ENCODE measurements at regions of chr2 and their contacts with region 1.

Region 1: DNA sequence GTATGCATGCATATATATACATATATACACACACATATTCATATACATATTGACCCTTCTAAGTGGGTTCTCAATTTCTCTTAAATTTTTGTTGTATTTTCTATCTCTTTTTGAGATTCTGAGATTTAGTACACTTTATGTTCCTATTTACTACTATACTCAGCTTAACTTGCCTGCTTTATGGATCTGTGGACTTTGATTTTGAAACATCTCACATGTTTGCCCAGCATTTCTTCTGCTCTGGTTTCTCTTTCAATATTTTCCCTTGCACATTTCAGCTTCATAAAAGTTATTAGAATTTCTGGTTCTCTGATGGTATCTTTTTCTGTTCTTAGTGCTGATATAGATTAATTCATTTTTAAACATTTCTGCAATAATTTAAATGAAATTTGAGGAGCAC is 380.6 kb downstream of the SPAG16 start:
- DNase-seq: no peak
- H3K4me3 ChIP-seq: no peak overlapping the region
- H3K4me3 Mint-ChIP-seq: no peak overlapping the region
- H3K27ac Mint-ChIP-seq: no peak overlapping the region
- H3K4me1 ChIP-seq: peaks cover 9% of the 10 kb centered on the region; the same call in 1 of the 2 replicates
- H3K4me1 Mint-ChIP-seq: peaks cover 15% of the 10 kb centered on the region
- H3K27me3 ChIP-seq: no peaks in the 10 kb centered on the region
- H3K27me3 Mint-ChIP-seq: no peaks in the 10 kb centered on the region
- CTCF ChIP-seq: no peak

Region 2: DNA sequence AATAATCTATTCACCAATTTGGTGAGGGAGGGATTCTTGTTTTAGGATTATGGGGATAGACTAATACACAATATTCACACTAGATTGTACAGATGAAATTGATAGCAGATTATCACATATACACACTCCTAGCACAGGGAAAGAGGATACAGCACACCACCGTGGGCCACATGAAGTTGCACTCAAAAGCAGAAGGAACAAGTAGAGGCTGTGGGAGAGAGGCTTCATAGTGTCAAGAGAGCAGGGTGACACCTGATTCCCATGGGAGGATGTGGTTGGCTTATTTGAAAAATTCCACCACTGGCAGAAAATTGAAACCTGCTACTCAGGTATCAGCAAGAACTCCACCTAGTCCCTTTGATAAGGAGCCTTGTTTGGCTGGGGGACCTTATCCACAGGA is 15.1 kb after region 1 on chr2:
- CTCF ChIA-PET with region 1: no interaction called
- POLR2A ChIA-PET with region 1: no interaction called
- intact Hi-C with region 1: loop called (anchors 1 kb)
- DNase-seq: no peak
- H3K4me3 ChIP-seq: no peak overlapping the region
- H3K4me3 Mint-ChIP-seq: no peak overlapping the region
- H3K27ac Mint-ChIP-seq: peak overlapping the region; percentile 19
- H3K4me1 ChIP-seq: peaks cover 17% of the 10 kb centered on the region
- H3K4me1 Mint-ChIP-seq: peaks cover 25% of the 10 kb centered on the region
- H3K27me3 ChIP-seq: no peaks in the 10 kb centered on the region
- H3K27me3 Mint-ChIP-seq: no peaks in the 10 kb centered on the region
- CTCF ChIP-seq: no peak

Measured in Caco-2 (cell line).